ENCODE measurements at regions of chr6 and their contacts with region 1.

Region 1: DNA sequence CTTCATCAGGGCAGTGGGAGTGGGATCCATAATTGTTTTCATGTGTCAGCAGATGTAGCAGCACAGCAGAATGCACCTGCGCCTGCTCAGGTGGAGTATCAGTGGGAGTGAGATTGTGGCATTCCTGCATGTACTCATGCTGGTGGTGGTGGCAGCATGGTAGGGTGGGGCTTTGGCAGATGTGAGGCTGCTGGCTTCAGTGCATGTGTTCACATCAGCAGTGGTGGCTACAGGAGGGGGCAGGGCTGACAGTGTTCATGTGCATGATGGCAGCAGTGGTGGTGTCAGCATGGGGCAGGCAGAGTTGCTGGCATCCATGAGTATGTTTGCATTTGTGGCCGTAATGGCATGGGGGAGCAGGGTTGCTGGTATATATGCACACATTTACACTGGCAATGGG is 413.9 kb upstream of the CITED2 start:
- DNase-seq: no peak
- H3K4me3 ChIP-seq: no peak overlapping the region
- H3K27ac ChIP-seq: no peak overlapping the region
- H3K4me1 ChIP-seq: no peaks in the 10 kb centered on the region
- H3K27me3 ChIP-seq: no peaks in the 10 kb centered on the region
- CTCF ChIP-seq: no peak

Region 2: GRCh38 chr6:139588076-139588639 is 200.1 kb before region 1 on chr6:
- CTCF ChIA-PET with region 1: no interaction called
- POLR2A ChIA-PET with region 1: no interaction called
- intact Hi-C with region 1: no loop called
- DNase-seq: peak; percentile 26
- H3K4me3 ChIP-seq: no peak overlapping the region
- H3K27ac ChIP-seq: no peak overlapping the region
- H3K4me1 ChIP-seq: peaks cover 15% of the 10 kb centered on the region
- H3K27me3 ChIP-seq: no peaks in the 10 kb centered on the region
- CTCF ChIP-seq: no peak

Region 3: DNA sequence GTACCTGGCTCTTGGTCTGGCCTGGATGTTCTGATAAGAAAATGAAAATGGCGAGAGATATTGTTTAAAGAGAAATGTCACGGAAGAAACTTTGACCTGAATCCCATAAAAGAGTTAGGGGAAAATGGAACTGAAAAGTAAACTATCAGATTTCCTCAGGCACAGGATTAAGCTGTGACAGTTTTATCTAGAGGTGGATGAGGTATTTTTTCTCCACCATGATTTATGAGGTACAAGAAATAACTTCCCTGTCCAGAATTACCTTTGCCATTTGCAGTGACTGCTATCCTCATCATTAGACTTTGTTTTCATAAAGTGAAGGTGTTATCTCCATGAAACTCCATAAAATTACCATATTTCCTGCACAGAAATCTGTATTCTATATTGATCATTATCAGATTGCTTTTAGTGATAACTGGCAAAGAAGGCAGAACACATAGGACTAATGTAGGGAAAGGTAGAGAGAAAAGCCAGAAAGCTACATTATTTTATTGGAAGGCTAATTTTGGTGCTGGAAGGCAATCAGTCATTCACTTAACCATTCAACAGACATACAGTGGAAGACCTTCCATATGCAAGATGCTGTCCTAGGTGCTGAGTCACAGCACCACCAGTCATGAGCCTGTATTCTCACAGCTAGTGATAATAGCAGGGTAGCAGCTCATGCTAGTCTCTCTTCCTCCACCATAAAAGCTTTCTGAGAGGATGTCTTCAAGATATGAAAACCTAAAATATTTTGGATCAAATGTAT is 13.4 kb after region 1 on chr6:
- CTCF ChIA-PET with region 1: interaction called, 11 read pairs
- POLR2A ChIA-PET with region 1: no interaction called
- intact Hi-C with region 1: no loop called
- DNase-seq: peak; percentile 40
- H3K4me3 ChIP-seq: no peak overlapping the region
- H3K27ac ChIP-seq: no peak overlapping the region
- H3K4me1 ChIP-seq: no peaks in the 10 kb centered on the region
- H3K27me3 ChIP-seq: no peaks in the 10 kb centered on the region
- CTCF ChIP-seq: no peak